ENCODE measurements at regions of chr5 and their contacts with region 1.

Region 1: GRCh38 chr5:149371296-149371962 is 7.7 kb downstream of the IL17B start:
- DNase-seq: peak; percentile 77
- H3K4me3 ChIP-seq: no peak overlapping the region
- H3K27ac ChIP-seq: no peak overlapping the region
- H3K4me1 ChIP-seq: peaks cover 5% of the 10 kb centered on the region
- CTCF ChIP-seq: peak; percentile 81

Region 2: GRCh38 chr5:149228618-149229297 is 142.7 kb before region 1 on chr5:
- CTCF ChIA-PET with region 1: no interaction called
- POLR2A ChIA-PET with region 1: no interaction called
- intact Hi-C with region 1: no loop called
- DNase-seq: no peak
- H3K4me3 ChIP-seq: no peak overlapping the region
- H3K27ac ChIP-seq: no peak overlapping the region
- H3K4me1 ChIP-seq: no peaks in the 10 kb centered on the region
- CTCF ChIP-seq: no peak

Region 3: DNA sequence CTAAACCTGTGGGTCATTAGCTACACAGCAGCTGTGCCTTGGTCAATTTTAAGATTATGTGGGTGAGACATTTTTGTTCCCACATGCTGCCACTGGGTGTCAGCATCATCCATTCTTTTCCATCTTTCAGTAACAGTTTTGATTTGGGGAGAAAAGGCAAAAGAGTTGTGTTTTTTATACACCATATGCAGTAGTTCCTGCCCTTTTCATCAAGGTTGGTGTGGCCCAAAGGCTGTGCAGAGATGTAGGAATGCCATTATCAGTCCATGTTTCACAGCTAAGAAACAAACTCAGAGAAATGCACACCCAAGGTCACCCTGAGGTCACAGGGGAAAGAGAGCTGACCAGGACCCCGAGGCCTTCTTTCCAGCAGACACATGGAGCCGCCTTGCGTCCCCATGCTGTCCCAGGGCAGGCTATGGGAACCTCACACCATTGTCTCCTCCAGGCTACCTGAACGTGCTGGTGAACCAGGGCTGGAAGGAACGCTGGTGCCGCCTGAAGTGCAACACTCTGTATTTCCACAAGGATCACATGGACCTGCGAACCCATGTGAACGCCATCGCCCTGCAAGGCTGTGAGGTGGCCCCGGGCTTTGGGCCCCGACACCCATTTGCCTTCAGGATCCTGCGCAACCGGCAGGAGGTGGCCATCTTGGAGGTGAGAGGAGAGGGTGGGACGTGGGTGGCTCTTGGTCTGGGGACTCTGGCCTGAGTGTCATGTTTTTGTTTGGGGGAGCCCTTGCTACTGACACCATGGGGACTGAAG is 54.0 kb before region 1 on chr5:
- CTCF ChIA-PET with region 1: interaction called, 8 read pairs
- POLR2A ChIA-PET with region 1: interaction called, 3 read pairs
- intact Hi-C with region 1: loop called (anchors 1 kb)
- DNase-seq: peak; percentile 54
- H3K4me3 ChIP-seq: no peak overlapping the region
- H3K27ac ChIP-seq: no peak overlapping the region
- H3K4me1 ChIP-seq: no peaks in the 10 kb centered on the region
- CTCF ChIP-seq: peak; percentile 90

Region 4: DNA sequence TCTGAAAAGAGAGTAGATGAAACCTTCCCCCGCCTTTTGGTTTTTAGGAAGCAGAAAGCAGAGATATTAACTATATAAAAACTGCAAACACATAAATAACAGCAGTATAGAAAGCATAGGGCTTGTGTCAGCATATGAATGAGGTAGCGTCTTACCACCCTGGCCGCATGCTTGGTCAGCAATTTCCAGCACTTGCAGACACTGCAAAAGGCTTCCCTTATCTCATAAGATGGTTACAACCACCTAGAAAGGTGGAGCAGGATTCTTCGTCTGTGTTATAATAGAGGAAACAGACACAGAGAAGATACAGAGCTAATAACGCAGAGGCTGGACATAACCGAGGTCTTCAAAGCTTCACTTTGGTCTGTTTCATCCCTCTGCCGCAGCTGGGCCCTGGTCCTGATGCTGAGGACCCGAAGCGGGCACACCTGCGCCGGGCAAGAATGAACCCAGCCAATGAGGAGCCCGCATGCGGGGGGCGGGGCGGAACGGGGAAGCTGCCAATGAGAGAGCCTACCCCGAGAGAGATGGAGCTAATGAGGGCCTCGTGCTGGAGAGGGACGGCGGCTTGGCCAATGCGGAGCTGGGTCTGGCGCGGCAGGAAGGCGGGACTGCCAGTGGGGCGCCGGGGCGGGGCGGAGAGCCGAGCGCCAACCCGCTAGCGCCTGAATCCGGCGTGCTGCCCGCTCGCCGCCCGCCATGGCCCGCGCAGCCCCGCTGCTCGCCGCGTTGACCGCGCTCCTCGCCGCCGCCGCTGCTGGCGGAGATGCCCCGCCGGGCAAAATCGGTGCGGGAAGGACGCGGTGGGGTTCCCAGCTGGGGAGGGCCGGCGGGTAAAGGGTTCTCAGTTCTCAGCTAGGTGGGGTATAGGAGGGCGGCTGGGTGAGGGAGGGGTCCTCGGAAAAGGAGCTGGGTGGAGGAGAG is 13.8 kb before region 1 on chr5 and contains the start of gene PCYOX1L:
- CTCF ChIA-PET with region 1: interaction called, 10 read pairs
- POLR2A ChIA-PET with region 1: interaction called, 5 read pairs
- intact Hi-C with region 1: no loop called
- DNase-seq: peak; percentile 96
- H3K4me3 ChIP-seq: peak within 1 kb of the TSS; percentile 94
- H3K27ac ChIP-seq: peak within 1 kb of the TSS; percentile 53
- H3K4me1 ChIP-seq: peaks cover 21% of the 10 kb centered on the region
- CTCF ChIP-seq: no peak
- total RNA-seq, gene PCYOX1L: 18.5 and 22.5 TPM in 2 replicates

Measured in OCI-LY7 (cell line).